Prostate gland (tissue), 2 donors: ENCODE measurements at regions of chr21 and their contacts with region 1.

Region 1: DNA sequence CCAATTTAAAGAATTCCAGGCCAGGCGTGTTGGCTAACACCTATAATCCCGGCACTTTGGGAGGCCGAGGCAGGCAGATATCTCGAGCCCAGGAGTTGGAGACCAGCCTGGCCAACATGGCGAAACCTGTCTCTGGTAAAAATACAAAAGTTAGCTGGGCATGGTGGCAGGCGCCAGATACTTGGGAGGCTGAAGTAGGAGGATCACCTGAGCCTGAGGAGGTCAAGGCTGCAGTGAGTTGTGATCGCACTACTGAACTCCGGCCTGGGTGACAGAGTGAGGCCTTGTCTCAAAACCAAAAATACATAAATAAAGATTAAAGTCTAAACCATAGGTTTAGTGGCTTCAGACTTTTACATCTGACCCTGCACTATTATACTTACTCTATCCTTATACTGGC is 32.4 kb downstream of the BTG3 start:
- DNase-seq: no peak
- H3K4me3 ChIP-seq: no peak overlapping the region
- H3K27ac ChIP-seq: no peak overlapping the region
- H3K4me1 ChIP-seq: no peaks in the 10 kb centered on the region
- H3K27me3 ChIP-seq: no peaks in the 10 kb centered on the region
- CTCF ChIP-seq: no peak
- POLR2A ChIP-seq: no peak

Region 2: DNA sequence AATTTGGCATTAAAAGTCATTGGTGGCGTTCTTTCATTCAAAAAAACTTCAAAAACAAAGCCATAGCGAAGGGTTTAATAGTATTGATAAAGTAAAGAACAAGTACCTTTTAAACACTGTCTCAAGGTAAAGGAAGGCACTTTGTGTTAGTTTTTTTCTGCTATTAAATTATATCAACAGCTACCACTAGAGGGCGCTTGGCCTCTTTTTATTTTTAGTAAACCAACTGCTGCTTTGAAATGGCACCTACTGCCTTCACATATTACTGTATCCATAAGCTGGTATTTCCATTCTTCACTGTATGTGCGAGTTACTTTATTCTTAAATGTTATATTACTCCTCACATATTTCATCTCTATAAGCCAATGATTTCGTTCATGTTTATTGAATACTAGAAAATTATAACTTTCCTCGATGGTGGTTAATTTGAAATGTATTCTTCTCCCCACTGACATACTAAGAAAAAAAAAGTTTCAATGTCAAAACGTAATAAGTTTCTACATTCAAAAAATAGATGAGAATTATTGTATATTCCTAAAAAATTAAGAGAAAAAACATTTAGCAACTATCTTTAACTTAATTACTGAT is 193.2 kb before region 1 on chr21:
- intact Hi-C with region 1: loop called (anchors 5 kb)
- DNase-seq: peak; percentile 75
- H3K4me3 ChIP-seq: no peak overlapping the region
- H3K27ac ChIP-seq: no peak overlapping the region
- H3K4me1 ChIP-seq: no peaks in the 10 kb centered on the region
- H3K27me3 ChIP-seq: no peaks in the 10 kb centered on the region
- CTCF ChIP-seq: peak; percentile 87 to 97 (median 88)
- POLR2A ChIP-seq: no peak